Posterior cingulate gyrus (tissue), 11 donors: ENCODE measurements at regions of chr21 and their contacts with region 1.

Region 1: DNA sequence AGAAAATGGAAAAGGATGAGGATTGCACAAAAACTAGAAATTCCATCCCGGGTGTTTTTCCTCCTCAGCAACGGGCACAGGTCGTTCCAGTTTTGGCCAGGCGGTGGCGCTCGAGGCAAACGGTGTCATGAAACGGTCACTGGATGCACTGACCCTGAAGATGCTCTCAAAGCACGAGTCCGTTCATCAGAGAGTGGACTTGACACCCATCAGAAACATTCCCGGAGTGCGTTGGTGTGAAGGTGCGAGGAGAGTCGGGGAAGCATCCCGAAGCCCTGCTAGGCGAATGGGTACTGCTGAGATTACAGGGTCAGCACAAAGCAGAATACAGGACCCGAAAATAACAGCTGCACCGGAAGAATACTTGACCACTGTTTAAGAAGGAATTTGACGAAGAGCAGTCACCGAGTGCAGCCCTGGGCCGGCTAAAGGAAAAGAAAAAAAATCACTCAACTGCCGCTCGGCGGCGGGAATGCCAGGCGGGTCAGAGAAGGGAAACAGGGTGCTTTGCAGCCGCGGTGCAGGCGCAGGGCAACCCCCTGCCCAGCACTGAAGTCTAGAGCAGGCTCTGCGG is 71.7 kb upstream of the ETS2 start:
- DNase-seq: peak; percentile 70 to 97 (median 90)

Region 2: DNA sequence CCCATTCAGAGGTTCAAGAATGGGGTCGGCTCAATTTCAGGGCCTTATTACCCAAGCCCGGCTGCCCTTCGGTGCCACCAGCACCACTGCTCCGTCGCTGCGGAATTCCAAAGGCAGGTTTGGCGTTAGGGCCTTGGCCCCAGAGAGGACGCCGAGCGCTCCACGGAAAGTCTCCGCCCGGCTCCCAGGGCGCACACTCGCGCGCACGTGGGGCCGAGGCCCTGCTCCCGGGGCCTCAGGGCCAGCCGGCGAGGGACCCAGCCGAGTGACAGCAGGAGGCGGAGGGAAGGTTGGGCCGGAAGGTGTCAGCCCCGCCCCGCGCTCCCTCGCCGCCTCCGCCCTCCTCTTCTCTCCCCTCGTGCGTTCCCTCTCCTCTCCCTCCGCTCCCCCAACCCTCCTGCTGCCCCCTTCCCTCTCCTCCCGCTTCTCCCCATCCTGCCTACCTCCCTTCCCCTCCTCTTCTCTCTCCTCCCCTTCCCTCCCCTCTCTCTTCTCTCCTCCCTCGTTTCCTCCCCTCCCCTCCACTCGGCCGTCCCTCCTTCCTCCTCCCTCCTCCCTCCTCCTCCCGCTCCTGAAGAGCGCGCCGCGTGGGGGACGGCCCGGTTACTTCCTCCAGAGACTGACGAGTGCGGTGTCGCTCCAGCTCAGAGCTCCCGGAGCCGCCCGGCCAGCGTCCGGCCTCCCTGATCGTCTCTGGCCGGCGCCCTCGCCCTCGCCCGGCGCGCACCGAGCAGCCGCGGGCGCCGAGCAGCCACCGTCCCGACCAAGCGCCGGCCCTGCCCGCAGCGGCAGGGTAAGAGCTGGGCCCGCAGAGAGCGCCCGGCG is 71.5 kb after region 1 on chr21 and contains the start of gene ETS2:
- intact Hi-C with region 1: loop called (anchors 5 kb)
- DNase-seq: peak; percentile 50 to 97 (median 79)

Region 3: GRCh38 chr21:39125752-39126485 is 391.9 kb after region 1 on chr21:
- intact Hi-C with region 1: loop called (anchors 2 kb)
- DNase-seq: peak in 2 of 10 donors; percentile 11 to 22

Region 4: DNA sequence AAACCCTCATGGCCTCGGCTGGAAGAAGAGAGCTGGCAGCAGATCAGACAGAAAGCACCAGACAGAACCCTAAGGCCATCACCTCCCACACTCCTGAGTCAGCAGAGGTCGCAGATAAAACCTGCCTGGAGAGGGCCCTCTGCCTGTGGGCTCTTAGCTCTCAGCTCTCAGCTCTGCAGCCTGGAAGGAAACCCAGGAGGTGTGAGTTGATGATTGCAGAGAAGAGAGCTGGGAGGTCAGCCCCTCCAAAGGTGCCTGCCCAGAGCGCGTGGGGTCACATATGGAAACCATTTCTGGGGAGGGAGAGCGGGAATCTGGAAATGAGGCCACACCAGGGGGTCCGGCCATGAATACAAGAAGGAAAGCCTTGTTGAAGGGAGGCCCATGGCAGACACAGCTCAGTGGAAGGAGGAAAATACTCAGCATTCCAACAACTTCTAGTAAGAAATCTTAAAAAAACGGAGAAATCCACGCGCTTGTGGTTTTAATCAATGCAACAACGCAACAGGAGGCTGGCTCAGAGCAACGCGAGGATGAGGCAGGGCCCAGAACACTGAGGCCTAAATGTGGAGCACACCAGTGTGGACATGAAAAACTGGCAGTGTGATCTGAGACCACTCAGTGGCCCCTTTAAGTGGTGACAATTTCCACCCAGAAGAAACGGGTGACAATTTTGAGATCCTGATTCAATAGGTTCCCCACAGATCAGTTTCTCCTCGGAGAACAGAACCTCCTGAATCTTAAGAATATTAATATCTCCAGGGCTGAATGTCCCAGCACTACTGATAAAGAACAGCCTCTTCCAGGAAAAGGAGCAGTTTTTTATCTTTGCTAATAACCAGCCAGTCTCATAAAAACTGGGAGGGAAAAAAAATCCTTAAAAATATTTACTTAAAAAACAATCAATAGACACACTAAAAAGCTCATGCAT is 403.5 kb after region 1 on chr21:
- intact Hi-C with region 1: loop called (anchors 1 kb)
- DNase-seq: no peak

Region 5: DNA sequence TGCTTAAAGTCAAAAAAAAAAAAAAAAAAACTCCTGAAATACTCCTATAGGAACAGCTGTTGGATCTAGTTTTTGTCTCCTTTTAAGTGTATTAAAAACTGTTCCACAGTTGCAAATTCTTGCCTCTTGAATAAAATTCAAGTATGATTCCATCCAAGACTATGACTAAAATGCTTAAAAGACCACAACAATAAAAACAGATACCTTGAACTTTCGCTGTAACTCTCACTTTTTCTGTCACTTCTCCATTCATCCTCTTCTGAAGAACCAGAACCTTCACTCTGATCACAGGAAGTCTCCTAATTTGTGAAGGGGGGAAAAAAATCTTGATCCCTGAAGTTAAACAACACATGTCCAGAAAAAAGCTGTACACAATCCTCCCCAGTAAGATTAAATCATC is 504.2 kb after region 1 on chr21:
- intact Hi-C with region 1: no loop called
- DNase-seq: no peak

Region 6: GRCh38 chr21:39445321-39446269 is 711.5 kb after region 1 on chr21 and contains the start of gene LCA5L:
- intact Hi-C with region 1: loop called (anchors 5 kb)
- DNase-seq: peak; percentile 73 to 97 (median 80)